ENCODE measurements at regions of chr10 and their contacts with region 1.

Region 1: DNA sequence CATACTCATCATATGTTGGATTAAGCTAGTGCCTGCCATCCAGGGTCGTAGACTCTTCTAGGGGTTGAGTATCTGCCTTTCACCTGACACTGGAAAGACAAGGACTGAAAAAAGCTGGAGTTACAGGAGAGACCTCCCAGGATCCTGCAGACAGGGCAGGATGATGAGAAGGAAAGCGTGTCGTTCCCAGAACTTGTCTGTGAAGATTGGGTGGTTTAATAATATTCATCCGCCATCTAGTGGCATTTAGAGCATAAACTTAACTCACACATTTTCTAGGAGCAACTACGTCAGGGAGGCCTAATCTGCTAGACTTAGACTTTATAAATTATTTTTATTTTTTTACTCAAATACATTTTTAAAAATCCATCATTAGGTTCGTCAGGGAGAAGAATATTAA is 59.6 kb downstream of the ADRB1 start:
- DNase-seq: no peak
- H3K4me3 ChIP-seq: no peak overlapping the region
- H3K27ac ChIP-seq: no peak overlapping the region
- H3K4me1 ChIP-seq: no peaks in the 10 kb centered on the region
- H3K27me3 ChIP-seq: no peaks in the 10 kb centered on the region
- CTCF ChIP-seq: peak; percentile 60

Region 2: GRCh38 chr10:113802997-113803396 is 300.3 kb before region 1 on chr10:
- intact Hi-C with region 1: loop called (anchors 2 kb)
- DNase-seq: no peak
- H3K4me3 ChIP-seq: no peak overlapping the region
- H3K27ac ChIP-seq: no peak overlapping the region
- H3K4me1 ChIP-seq: no peaks in the 10 kb centered on the region
- H3K27me3 ChIP-seq: no peaks in the 10 kb centered on the region
- CTCF ChIP-seq: no peak

Region 3: GRCh38 chr10:113907166-113907565 is 196.1 kb before region 1 on chr10:
- intact Hi-C with region 1: loop called (anchors 10 kb)
- DNase-seq: no peak
- H3K4me3 ChIP-seq: no peak overlapping the region
- H3K27ac ChIP-seq: no peak overlapping the region
- H3K4me1 ChIP-seq: no peaks in the 10 kb centered on the region
- H3K27me3 ChIP-seq: no peaks in the 10 kb centered on the region
- CTCF ChIP-seq: no peak